Left colon (tissue), 2 donors: ENCODE measurements at regions of chr9 and their contacts with region 1.

Region 1: GRCh38 chr9:90870621-90871326 is 69.2 kb downstream of the SYK start:
- DNase-seq: peak in 1 of 2 donors; percentile 34
- ATAC-seq: peak; percentile 59

Region 2: GRCh38 chr9:89579741-89580385 is 1290.9 kb before region 1 on chr9:
- intact Hi-C with region 1: loop called in 1 of 2 experiments (anchors 10 kb)
- DNase-seq: no peak
- ATAC-seq: no peak

Region 3: GRCh38 chr9:90124961-90125360 is 745.8 kb before region 1 on chr9:
- intact Hi-C with region 1: loop called in 1 of 2 experiments (anchors 10 kb)
- DNase-seq: no peak
- ATAC-seq: no peak

Region 4: DNA sequence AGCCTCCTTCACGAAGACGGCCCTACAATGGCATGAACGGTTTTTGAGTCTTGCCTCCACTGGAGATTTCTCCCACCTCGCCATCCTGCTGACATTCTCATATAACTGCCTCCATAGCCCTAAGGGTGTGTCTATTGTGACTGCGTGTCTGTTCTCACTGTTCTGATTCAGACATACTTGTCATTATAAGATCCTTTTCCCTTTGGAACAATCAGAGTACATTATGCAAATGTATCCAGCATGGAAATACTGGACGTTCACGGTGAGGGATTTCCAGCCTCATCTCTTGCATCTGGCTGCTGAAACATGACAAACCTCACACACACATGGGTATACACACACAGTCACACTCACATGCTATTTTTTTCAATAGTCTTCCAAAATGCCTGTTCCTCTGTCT is 630.2 kb before region 1 on chr9:
- intact Hi-C with region 1: loop called in 1 of 2 experiments (anchors 10 kb)
- DNase-seq: no peak
- ATAC-seq: no peak

Region 5: GRCh38 chr9:91197232-91198181 is 326.7 kb after region 1 on chr9:
- intact Hi-C with region 1: no loop called
- DNase-seq: peak; percentile 68 to 92
- ATAC-seq: peak; percentile 66